AG04449 (cell line): ENCODE measurements at regions of chr11 and their contacts with region 1.

Region 1: GRCh38 chr11:58629857-58630256 is 7.4 kb downstream of the CNTF start:
- DNase-seq: peak; percentile 9
- H3K4me3 ChIP-seq: no peak overlapping the region
- CTCF ChIP-seq: peak; percentile 56

Region 2: DNA sequence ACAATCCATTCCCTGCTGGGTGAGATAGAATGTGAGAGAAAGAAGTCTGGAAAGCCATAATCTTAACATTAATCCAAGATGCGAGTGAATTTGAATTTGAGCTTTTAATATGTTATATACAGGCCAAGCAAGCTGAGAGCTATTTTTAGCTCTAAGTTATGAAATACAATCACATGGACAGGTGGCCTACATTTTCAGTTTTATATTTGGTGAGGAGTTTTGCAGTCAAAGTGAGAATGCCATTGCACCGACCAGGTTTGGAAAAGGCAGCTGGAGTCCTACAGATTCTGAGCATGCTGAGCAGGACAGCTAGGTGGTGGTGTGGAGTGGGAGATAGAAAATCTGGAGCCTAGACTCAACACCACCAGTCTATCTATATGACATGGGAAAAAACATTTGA is 134.0 kb before region 1 on chr11:
- CTCF ChIA-PET with region 1: no interaction called
- POLR2A ChIA-PET with region 1: no interaction called
- DNase-seq: no peak
- H3K4me3 ChIP-seq: no peak overlapping the region
- CTCF ChIP-seq: no peak

Region 3: GRCh38 chr11:58562375-58562800 is 67.5 kb before region 1 on chr11:
- CTCF ChIA-PET with region 1: interaction called, 58 read pairs
- POLR2A ChIA-PET with region 1: no interaction called
- DNase-seq: no peak
- H3K4me3 ChIP-seq: no peak overlapping the region
- CTCF ChIP-seq: no peak

Region 4: DNA sequence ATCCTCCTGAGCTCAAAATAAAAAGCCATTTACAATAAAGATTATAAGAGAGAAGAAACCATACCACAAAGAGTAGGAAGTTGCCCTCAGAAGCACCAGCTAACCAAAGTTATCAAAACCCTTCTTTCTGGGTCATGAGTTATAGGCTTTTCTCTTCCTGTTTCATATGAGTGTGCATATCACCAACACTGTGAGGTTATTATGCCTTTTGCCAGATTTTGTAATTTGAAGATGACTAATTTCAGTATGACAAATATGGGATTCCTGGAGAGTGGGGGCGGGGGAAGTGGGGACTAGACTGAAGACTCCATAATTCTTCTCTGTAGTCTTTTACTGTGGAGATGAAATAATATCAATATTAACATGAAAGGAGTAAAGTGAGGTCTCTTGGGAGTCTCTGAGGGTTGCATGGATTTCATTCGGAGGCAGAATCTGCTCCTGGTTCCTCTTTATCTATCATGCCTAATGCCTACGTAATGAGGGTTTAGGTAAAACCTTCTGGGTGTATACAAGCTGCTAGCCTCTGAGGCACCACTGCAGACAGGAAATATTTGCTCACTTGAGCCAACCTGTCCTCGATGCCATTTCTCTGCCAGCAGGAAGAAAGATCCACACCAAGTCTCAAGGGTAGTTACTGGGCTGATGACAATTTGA is 56.3 kb before region 1 on chr11:
- CTCF ChIA-PET with region 1: interaction called, 58 read pairs
- POLR2A ChIA-PET with region 1: interaction called, 3 read pairs
- DNase-seq: no peak
- H3K4me3 ChIP-seq: no peak overlapping the region; the same call in 1 of the 2 replicates
- CTCF ChIP-seq: no peak

Region 5: DNA sequence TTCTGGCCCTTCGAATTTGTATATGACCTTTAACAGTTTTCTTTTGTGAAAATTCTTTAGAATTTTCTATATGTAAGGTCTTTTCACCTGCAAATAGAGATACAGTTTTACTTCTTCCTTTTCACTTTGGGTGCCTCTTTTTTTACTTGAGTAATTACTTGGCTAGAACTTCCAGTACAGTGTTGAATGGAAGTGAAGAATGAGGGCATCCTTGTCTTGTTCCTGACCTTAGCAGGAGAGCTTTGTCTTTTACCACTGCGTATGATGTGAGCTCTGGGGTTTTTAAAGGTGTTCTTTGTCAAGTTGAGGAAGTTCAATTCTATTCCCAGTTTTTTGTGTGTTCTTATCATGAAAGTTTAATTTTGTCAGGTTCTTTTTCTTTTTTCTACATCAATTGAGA is 29.3 kb before region 1 on chr11:
- CTCF ChIA-PET with region 1: interaction called, 14 read pairs
- POLR2A ChIA-PET with region 1: no interaction called
- DNase-seq: no peak
- H3K4me3 ChIP-seq: no peak overlapping the region
- CTCF ChIP-seq: no peak

Region 6: DNA sequence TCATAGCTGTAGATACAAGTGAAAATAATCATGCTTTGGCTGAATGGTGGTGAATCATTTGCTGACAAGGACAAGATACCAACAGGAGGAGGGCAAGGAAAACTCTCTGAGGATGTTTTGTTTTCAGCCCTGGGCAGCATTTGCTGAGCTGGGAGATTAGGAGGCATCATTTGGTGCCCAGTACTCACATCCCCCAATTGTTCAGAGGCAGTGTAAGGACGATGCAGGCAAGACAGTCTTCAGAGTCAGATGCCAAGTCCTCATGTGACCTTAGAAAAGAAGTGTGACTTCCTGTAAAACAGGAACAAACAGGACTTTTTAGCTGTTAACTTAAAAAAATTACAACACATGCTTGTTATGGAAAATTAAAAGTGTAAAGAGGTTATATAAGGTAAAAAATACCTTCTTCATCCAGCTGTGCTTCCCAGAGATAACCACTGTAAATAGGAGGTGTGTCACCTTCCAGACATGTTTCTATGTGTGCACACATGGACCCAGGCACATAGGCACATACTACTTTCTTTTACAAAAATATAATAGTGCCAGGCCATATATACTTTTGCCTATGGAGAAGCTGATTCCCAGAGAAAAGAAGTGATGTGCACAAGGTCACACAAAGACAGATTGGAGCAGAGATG is 10.6 kb after region 1 on chr11:
- CTCF ChIA-PET with region 1: interaction called, 47 read pairs
- POLR2A ChIA-PET with region 1: no interaction called
- DNase-seq: no peak
- H3K4me3 ChIP-seq: no peak overlapping the region
- CTCF ChIP-seq: no peak

Region 7: GRCh38 chr11:58654079-58654907 is 24.4 kb after region 1 on chr11:
- CTCF ChIA-PET with region 1: interaction called, 57 read pairs
- POLR2A ChIA-PET with region 1: no interaction called
- DNase-seq: no peak
- H3K4me3 ChIP-seq: no peak overlapping the region
- CTCF ChIP-seq: peak; percentile 92